Dorsolateral prefrontal cortex (tissue), 120 donors: ENCODE measurements at regions of chr11 and their contacts with region 1.

Region 1: GRCh38 chr11:67167086-67167485 is 48.0 kb downstream of the KDM2A start:
- DNase-seq: no peak
- H3K4me3 ChIP-seq: no peak overlapping the region
- H3K27ac ChIP-seq: no peak overlapping the region
- H3K27me3 ChIP-seq: no peaks in the 10 kb centered on the region
- CTCF ChIP-seq: no peak

Region 2: GRCh38 chr11:67082035-67082791 is 84.9 kb before region 1 on chr11:
- intact Hi-C with region 1: loop called (anchors 5 kb)
- DNase-seq: no peak
- H3K4me3 ChIP-seq: peak overlapping the region in 19 of 59 donors; percentile 1 to 42 (median 12)
- H3K27ac ChIP-seq: no peak overlapping the region
- H3K27me3 ChIP-seq: peaks cover 0 to 2% (median 0%) of the 10 kb centered on the region in 45 donors
- CTCF ChIP-seq: no peak

Region 3: DNA sequence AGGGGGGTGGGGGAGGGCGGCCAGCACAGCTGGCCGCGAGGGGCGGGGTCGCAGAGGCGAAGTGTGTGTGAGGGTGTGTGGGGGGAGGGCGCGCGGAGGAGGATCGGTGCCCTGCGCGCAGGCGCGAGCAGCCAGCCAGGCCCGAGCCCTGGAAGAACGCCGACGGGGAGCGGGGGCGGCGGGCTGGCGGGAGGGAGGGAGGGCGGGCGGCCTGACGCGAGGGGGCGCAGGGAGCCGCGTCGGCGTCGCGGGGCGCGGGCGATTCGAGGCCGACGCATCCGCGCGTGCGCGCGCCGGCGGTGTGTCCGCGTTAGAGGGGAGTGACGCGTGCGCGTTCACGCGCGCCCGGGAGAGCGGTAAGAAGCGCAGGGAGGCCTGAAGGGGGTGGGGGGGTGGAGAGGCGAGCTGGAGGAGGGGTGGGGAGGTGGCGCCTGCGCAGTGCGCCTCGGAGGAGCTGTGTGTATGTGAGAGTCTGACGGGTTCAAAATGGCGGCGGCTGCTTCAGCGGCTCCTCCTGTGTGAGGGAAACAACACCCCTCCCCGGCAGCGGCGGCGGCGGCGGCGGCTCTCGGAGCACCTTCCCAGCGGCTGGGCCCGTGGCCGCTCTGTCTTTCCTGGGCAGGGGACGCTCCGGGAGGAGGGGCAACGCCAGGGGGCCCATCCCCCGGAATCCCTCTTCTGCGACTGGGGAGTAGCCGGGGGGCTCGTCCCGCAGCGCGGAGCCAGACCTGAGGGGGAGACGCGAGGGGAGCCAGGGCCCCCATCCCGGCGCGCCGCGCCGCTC is 48.1 kb before region 1 on chr11 and contains the start of gene KDM2A:
- intact Hi-C with region 1: loop called in 1 of 2 experiments (anchors 5 kb)
- DNase-seq: peak; percentile 94 to 99 (median 98)
- H3K4me3 ChIP-seq: peak within 1 kb of the TSS; percentile 68 to 97 (median 90)
- H3K27ac ChIP-seq: peak within 1 kb of the TSS; percentile 90 to 100 (median 98)
- H3K27me3 ChIP-seq: no peaks in the 10 kb centered on the region
- CTCF ChIP-seq: peak in 47 of 56 donors; percentile 9 to 74 (median 45)
- total RNA-seq, gene KDM2A: 56.5 to 97.4 (median 71.9) TPM